GM13976 (cell line): ENCODE measurements at regions of chr6 and their contacts with region 1.

Region 1: DNA sequence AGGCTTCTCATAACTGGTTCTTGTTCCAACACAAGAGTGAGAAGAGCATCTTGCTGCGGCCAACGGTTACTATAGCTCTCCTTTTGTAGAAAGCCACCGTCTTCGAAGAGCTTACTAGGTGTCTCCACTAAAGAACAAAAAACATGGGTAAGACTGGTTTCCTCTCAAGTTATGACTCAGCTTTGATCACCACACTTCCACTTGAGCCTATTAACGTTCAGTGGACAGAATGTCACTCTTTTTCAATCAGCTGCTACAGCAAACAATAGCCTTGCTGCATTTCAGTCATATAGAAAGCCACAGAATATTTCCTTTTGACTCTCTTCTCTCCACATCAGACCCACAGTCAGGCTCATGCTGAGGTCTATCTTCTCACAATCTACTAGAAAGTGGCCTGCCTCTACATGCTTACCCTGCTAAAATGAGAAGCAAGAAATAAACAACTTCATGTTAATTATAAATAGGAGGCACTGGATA is 243.5 kb upstream of the PREP start:
- DNase-seq: peak; percentile 40
- CTCF ChIP-seq: no peak

Region 2: DNA sequence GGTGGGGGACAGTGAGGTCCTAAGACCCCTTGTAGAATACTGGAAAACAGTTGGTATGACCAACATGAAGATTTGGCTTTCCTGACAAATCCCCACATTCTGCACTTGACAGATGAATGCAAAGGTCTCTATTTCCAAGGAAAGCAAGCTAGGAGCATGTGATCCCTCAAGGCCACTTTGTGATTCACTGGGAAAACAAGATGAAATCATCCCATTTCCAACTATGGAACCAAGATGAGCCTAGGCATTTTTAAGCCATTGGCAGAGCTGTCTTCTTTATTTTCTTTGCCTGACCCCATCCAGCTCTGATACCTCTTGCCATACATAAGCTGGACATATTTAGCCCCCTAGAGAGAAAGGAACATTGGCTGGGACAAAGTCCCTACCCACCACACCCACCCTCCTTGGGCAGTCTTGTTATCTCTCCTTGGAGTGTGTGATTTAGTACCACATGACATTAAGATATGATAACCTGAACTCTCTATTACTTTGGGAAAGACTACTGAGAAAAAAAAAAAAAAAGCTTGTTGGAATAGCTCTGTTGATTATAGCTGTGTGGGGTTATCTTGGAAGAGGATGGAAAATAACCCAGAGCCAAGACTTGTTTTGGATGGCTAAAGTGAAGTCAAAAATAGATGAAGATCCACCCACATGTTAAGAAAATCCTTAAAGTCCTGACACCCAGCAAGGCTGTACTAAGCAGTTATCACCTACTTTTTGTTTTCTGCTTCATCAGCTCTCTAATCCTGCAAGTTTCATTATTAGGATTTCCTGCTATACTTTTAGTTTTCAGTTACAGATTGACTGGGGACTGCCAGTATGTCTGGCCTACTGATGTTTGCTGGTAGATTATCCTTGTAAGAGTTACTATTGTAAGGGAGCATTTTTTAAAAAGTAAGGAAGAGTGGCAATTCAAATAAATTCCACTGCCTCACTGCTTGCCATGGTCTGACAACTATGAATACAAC is 153.4 kb before region 1 on chr6:
- in situ Hi-C with region 1: loop called (anchors 10 kb)
- DNase-seq: peak; percentile 45
- CTCF ChIP-seq: no peak

Region 3: DNA sequence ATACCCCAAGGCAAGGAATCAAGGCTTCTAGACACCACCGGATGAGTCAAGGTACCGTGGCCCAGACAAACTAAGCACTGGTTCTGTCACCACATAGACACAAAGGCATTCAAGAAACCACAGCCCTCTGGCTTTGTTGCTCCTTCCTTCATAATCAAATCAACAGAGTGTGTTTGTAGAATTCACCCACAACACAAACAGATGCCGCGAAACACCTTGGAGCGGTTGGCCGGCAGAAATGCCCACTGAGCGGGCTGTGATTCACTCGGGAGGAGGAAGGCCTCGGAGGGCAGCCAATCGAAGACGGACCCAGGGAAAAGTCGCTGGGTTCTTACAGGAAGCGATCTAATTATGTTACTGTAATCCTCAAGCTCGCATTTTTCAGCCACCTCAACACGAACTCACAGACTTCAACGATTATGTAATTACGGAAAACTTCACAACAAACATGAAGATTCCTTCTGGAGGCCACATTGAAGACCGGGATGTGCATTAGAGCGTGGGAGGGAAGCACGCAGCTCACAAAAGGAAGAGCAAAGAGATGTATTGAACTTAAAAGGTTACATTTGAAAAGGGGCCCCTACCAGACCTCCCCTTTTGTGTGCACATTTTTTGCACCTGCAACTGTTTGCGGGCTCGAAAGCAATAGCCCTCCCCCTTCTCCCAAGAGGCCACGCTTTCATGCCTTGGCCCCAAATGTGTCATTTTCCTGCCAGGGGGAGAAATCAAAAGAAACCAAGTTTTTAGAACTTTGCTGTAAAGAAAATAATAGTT is 58.9 kb before region 1 on chr6:
- in situ Hi-C with region 1: no loop called
- DNase-seq: no peak
- CTCF ChIP-seq: no peak

Region 4: DNA sequence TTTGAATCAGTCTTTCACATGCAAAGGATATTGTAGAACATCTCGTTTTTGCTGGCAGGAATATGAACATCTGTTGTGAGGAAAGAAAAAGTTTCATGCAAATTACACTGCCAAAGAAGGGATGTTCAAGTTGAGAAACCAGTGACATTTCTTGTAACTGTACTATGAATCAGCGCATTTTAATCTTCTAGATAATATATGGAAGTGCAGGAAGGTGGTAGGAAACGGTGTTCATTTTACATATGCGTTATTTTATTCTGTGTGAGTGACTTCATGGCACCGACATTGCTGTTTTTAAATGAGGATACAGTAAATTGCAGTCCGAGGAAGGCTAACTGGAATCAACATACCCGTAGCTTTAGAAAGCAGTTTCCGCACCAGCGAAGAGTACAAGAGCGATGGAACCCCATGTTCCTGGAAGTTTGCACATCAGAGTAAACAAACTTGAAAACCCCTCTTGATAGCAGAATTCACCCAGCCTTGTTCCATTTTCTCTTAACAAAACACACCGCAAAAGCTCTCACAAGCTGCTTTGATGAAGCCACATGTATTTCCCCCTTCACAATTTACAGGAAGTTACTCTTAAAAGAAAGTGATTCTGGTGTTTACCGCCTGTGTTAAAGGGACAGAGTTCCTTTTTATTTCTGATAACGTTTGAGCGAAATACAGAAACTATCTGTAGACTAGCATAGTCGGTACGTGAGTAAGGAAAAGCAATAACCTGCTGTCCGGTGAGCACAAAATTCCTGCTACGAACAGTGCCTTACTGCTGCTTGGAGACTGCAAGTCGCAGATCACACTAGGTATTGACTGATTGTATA is 451.2 kb after region 1 on chr6:
- in situ Hi-C with region 1: loop called (anchors 10 kb)
- DNase-seq: peak; percentile 45
- CTCF ChIP-seq: no peak